Activated CD8-positive, alpha-beta memory T cell treated with anti-CD3 and anti-CD28 coated beads, Interleukin-2, amount 10 ng/mL, durations not matched to agents 7 days and 5 days (primary cell): ENCODE measurements at regions of chr19 and their contacts with region 1.

Region 1: GRCh38 chr19:32357720-32358119 is 12.3 kb downstream of the ZNF507 start:
- DNase-seq: no peak
- ATAC-seq: no peak
- H3K4me3 Mint-ChIP-seq: no peak overlapping the region
- H3K27ac Mint-ChIP-seq: peak overlapping the region; percentile 24
- H3K4me1 Mint-ChIP-seq: peaks cover 10% of the 10 kb centered on the region
- H3K27me3 Mint-ChIP-seq: no peaks in the 10 kb centered on the region

Region 2: DNA sequence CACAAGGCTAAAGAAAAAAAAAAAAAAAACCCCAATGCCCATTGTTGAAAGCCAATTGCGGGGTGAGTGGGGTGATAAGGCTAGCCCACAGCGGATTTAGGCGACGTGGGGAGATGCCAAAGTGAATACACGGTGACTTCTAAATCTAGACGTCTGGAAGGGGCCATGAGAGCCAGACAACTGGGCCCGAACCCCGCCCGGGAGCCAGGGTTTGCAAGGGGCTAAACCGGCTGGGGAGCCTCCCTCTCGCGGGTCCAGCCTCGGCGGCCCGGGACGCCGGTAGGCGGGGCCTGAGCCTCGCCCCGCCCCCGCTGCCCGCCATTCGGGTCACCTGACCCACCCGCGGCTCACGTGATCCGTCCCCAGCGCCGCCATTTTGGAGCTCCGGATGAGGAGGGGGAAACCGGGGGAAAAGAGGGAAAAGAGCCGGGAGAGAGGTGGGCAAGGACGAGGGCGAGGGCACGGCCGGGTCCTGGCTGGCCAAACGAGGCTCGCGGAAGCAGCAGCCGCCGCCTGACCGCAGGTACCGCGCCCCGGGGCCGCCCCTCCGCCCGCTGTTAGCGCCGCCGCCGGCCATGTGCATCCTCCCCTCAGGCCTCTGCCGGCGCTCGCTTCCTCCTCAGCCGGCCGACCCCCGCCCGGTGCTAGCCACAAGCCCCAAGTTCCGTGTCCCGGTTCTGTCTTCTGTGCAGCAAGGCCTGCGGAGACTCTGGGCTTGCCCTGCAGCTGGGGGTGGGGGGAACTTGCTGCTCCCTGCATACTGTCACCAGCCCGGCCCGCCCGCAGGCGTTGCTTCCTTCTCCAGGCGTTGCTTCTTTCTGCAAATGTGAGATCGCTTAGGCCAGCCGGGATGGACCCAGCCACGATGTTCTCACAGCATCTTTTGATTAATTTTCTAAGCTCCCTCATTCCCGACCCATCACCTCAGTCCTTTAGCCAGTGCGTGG is 12.2 kb before region 1 on chr19 and contains the start of gene ZNF507:
- CTCF ChIA-PET with region 1: interaction called, 13 read pairs
- DNase-seq: peak; percentile 90
- ATAC-seq: peak; percentile 90
- H3K4me3 Mint-ChIP-seq: peak within 1 kb of the TSS; percentile 98
- H3K27ac Mint-ChIP-seq: peak within 1 kb of the TSS; percentile 94
- H3K4me1 Mint-ChIP-seq: peaks cover 35% of the 10 kb centered on the region
- H3K27me3 Mint-ChIP-seq: peaks cover 3% of the 10 kb centered on the region
- total RNA-seq, gene ZNF507: 24.8 to 30.5 TPM